ENCODE measurements at regions of chr17 and their contacts with region 1.

Region 1: DNA sequence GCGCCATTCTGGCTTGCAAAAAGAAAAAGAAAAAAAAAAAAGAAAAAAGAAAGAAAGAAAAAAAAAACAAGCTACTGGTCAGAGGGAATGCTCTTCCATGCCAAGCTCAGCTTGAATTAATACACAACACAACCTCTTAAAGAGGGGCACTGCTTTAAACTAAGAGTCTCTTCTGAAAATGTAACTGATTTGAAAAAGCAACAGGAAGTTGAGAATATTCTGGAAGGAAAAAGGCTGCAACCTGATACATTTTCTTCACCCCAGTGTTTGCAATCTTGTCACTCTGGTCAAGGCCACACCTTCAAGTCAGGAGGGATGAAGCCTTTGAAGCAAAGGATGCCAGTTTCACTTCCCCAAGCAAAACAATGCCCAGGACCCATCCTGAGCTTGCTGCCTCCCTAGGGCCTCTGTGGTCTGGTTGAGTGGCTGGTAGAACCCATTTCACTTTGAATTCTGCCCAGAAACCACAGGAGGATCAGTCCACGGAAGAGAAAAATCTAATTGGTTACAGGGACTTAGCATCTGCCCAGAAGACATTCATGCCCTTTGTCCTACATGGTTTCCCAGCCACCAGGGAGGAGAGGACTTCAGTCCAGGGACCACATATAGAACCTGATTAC is 389.7 kb downstream of the SOX9 start:
- DNase-seq: peak in 1 of 6 donors; percentile 27
- ATAC-seq: peak in 3 of 4 donors; percentile 47 to 58 (median 55)
- H3K4me3 ChIP-seq: no peak overlapping the region
- H3K27ac ChIP-seq: peak overlapping the region in 2 of 4 donors; percentile 22 to 28
- H3K4me1 ChIP-seq: peaks cover 14 to 22% (median 17%) of the 10 kb centered on the region in 3 donors
- H3K27me3 ChIP-seq: no peaks in the 10 kb centered on the region
- CTCF ChIP-seq: no peak

Region 2: DNA sequence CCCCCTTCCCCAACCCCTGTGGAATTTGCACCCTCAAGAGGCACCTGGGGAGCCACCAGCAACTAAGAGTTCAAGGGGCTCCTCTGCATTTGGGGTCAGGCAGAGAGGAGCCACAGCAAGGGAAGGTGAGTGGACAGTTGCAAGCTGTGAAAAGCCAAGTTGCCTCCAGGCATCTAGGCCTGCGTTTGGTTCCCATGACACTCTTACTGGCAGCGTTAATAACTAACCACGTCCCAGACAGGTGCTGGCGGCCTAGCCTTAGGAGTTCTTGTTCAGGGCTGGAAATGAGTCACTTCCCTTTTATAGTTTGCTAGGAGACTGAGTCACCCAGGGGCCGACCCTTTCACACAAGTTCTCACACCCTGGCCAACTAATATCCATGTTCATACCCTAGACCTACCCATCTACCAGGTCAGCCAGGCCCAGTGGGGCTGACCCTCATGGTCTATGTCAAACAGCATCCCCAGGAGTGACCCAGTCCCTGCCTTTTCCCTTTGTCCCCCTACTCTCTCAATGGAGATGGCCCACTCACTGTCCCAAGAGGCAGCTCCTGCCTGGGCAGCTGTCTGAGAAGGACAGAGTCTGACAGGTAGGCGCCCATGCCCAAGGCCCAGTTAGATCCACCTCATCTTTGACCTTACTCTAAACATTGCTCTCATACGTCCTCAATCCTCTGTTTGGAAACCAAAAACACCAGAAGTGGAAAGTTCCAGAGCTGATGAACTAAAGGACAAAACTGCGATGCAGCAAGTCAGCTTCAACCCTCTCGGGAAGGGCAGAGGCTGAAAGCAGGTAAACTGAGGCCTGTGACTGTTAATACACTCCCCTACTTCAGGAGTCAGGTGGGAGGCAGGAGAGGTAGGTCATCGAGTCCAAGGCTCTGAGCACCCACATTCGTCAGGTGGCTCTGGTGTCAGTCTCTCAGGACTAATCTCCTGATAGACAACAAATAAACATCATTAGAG is 89.1 kb before region 1 on chr17:
- intact Hi-C with region 1: loop called in 1 of 3 experiments (anchors 10 kb)
- DNase-seq: peak in 5 of 6 donors; percentile 73 to 89 (median 86)
- ATAC-seq: peak; percentile 89 to 93 (median 92)
- H3K4me3 ChIP-seq: no peak overlapping the region
- H3K27ac ChIP-seq: peak overlapping the region; percentile 60 to 91 (median 76)
- H3K4me1 ChIP-seq: peaks cover 17 to 41% (median 19%) of the 10 kb centered on the region in 3 donors
- H3K27me3 ChIP-seq: no peaks in the 10 kb centered on the region
- CTCF ChIP-seq: no peak